Lower leg skin (tissue), 4 donors: ENCODE measurements at regions of chr10 and their contacts with region 1.

Region 1: GRCh38 chr10:71319042-71319799 is at the start of gene SLC29A3:
- DNase-seq: peak; percentile 59 to 95
- H3K4me3 ChIP-seq: peak within 1 kb of the TSS; percentile 65
- CTCF ChIP-seq: no peak
- POLR2A ChIP-seq: no peak
- total RNA-seq, gene SLC29A3: 1.1 to 5.7 (median 2.6) TPM

Region 2: DNA sequence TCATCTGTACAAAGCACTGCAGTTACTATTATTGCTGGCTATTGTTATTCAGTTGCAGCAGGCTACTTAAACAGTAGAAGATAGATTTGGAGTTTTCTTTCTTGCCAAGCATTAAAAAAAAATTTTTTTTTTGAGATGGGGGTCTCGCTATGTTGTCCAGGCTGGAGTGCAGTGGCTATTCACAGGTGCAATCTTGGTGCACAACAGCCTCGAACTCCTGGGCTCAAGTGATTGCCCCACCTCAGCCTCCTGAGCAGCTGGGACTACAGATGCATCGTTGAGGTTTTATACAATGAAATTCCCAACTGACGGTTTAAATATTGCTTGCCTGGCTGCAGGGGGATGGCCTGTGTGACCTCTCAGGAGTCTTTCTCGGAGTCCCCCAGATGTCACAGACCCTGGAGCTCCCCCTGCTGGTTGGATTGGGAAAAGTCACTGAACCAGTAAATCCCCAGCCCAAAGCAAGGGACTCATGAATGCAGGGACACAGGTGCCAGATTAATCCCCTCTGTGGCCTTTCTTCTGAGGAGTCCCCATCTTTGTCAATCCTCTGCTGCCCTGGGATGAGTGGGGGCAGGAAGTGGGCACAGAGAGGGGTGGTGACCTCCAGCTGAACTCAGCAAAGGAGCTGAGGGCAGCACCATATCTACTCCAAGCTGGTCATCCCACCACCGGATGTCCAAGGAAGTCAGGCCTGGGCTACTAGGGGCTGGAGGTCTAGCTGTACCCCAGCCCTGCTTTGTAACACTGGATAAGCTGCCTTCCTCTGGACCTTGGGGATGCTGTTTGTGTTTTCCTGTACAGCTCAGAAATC is 250.8 kb after region 1 on chr10:
- intact Hi-C with region 1: loop called (anchors 5 kb)
- DNase-seq: peak; percentile 62 to 93
- H3K4me3 ChIP-seq: no peak overlapping the region
- CTCF ChIP-seq: peak in 1 of 3 donors; percentile 41
- POLR2A ChIP-seq: no peak

Region 3: GRCh38 chr10:71647526-71648253 is 328.5 kb after region 1 on chr10:
- intact Hi-C with region 1: no loop called
- DNase-seq: no peak
- H3K4me3 ChIP-seq: no peak overlapping the region
- CTCF ChIP-seq: no peak
- POLR2A ChIP-seq: no peak

Region 4: GRCh38 chr10:71708301-71708703 is 389.1 kb after region 1 on chr10:
- intact Hi-C with region 1: loop called (anchors 5 kb)
- DNase-seq: no peak
- H3K4me3 ChIP-seq: no peak overlapping the region
- CTCF ChIP-seq: peak in 1 of 3 donors; percentile 64
- POLR2A ChIP-seq: no peak